ENCODE measurements at regions of chr4 and their contacts with region 1.

Region 1: DNA sequence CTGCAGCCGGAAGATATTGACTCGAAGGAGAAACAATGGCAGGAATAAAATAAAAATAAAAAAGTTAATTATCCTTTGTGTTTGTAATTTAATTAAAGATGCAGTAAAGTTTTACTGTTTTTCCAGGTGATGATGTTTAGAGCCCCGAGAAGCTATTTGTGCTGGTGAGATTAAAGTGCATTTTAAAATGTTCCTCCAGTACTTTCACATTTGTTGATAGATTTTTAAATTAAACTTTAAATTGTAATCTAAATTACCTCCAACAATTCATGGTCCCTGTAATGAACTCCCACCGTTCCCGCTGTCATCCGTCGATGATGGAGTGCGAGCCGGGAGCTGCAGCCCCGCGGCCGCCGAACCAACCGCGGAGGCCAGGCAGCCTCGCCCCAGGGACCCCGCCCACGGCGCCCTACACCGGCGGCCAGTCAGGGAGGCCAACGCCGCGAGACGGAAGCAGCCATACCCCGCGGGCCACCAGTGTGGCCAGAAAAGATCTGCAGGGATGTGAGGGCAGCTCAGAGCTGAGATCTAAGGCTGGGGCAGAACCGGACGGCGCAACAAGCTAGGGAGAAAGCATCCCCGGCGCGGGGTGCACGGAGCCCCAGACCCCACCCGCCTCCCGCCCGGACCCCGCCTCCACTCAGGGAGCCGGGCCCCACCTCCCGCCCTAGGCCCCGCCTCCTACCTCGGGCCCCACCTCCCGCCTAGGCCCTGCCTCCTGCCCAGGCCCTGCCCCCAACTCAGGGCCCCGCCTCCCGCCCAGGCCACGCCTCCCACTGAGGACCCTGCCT is 104.0 kb downstream of the FAM53A start:
- DNase-seq: no peak
- H3K4me3 ChIP-seq: peak overlapping the region; percentile 61 to 75 (median 64)
- H3K27ac ChIP-seq: peak overlapping the region; percentile 70 to 88 (median 82)
- H3K4me1 ChIP-seq: peaks cover 12 to 33% (median 27%) of the 10 kb centered on the region in 4 donors
- H3K27me3 ChIP-seq: peaks cover 0 to 39% (median 0%) of the 10 kb centered on the region in 4 donors
- CTCF ChIP-seq: no peak
- EP300 ChIP-seq: no peak
- POLR2A ChIP-seq: no peak

Region 2: DNA sequence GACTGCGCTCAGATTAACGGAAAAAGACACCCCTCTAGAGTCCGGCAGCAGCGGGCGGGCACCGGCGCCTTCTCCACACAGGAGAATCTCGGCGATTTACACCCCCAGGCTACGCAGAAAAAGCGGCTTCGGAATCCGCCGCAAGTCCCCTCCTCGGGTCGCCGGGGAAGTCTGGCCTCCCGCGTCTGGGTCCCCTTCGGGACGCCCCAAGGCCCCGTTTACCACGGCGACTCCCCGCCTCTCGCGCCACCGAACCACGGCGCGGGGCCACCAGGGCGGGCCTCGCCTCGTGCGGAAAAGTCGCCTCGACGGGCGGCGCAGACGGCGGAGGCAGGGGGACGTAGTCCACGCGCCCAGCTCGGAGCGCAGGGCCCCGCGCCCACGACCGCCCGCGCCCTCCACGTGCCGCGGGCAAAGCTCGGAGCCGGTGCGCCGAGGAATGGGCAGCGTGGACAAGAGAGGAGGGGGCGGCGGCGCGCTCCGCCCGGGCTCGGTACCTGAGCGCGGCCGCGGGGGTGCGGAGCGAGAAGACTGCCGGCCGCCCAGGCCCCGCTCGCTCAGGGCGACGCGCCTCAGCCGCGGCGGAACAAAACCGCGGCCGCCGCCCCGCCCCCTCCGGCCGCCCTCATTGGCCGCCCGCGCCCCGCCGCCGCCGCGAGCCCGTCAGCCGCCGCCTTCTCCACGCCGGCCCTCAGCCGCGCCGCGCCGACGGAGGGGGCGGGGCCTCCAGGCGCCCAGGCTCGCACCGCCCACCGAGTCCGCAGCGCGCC is 103.8 kb after region 1 on chr4 and contains the start of gene FAM53A:
- intact Hi-C with region 1: loop called (anchors 10 kb)
- DNase-seq: peak; percentile 94
- H3K4me3 ChIP-seq: peak within 1 kb of the TSS; percentile 65 to 91 (median 76)
- H3K27ac ChIP-seq: peak within 1 kb of the TSS; percentile 86 to 99 (median 96)
- H3K4me1 ChIP-seq: peaks cover 2 to 24% (median 22%) of the 10 kb centered on the region in 4 donors
- H3K27me3 ChIP-seq: no peaks in the 10 kb centered on the region
- CTCF ChIP-seq: peak in 1 of 3 experiments; percentile 10
- EP300 ChIP-seq: no peak
- POLR2A ChIP-seq: no peak
- total RNA-seq, gene FAM53A: 5.2 to 13.3 (median 8.9) TPM